Activated naive CD4-positive, alpha-beta T cell treated with anti-CD3 and anti-CD28 coated beads for 36 hours (primary cell): ENCODE measurements at regions of chr3 and their contacts with region 1.

Region 1: GRCh38 chr3:53375019-53375418 is 27.7 kb upstream of the DCP1A start:
- DNase-seq: peak; percentile 78
- H3K4me3 Mint-ChIP-seq: no peak overlapping the region
- H3K27ac Mint-ChIP-seq: no peak overlapping the region
- H3K4me1 Mint-ChIP-seq: no peaks in the 10 kb centered on the region
- H3K27me3 Mint-ChIP-seq: peaks cover 13% of the 10 kb centered on the region

Region 2: DNA sequence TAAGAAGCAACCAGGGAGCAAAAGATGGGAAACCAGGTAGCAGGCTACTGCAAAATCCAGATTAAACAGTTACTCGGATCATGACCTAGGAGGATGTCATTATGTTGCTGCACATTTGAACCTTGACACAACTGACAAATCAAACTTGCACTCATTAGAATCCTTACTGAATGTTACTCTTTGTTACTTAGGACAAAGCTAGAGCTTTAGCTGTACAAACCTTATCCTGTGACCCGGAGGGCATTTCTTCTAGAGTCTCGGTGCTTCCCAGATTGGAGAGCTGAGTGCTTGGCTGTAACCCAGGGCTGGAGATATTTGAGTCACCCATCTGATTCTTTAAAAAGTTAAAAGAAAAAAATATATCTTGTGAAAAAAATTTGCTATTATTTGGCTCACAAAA is 71.1 kb before region 1 on chr3:
- CTCF ChIA-PET with region 1: no interaction called
- intact Hi-C with region 1: loop called (anchors 1 kb)
- DNase-seq: no peak
- H3K4me3 Mint-ChIP-seq: no peak overlapping the region
- H3K27ac Mint-ChIP-seq: no peak overlapping the region
- H3K4me1 Mint-ChIP-seq: peaks cover 3% of the 10 kb centered on the region
- H3K27me3 Mint-ChIP-seq: no peaks in the 10 kb centered on the region

Region 3: GRCh38 chr3:53513556-53514190 is 138.7 kb after region 1 on chr3:
- CTCF ChIA-PET with region 1: interaction called, 4 read pairs
- intact Hi-C with region 1: loop called (anchors 10 kb)
- DNase-seq: peak; percentile 35
- H3K4me3 Mint-ChIP-seq: no peak overlapping the region
- H3K27ac Mint-ChIP-seq: no peak overlapping the region
- H3K4me1 Mint-ChIP-seq: no peaks in the 10 kb centered on the region
- H3K27me3 Mint-ChIP-seq: peaks cover 21% of the 10 kb centered on the region

Region 4: GRCh38 chr3:53709860-53710674 is 335.0 kb after region 1 on chr3:
- CTCF ChIA-PET with region 1: interaction called, 21 read pairs
- intact Hi-C with region 1: loop called (anchors 1 kb)
- DNase-seq: peak; percentile 79
- H3K4me3 Mint-ChIP-seq: no peak overlapping the region
- H3K27ac Mint-ChIP-seq: no peak overlapping the region
- H3K4me1 Mint-ChIP-seq: no peaks in the 10 kb centered on the region
- H3K27me3 Mint-ChIP-seq: peaks cover 3% of the 10 kb centered on the region

Region 5: GRCh38 chr3:53812434-53812833 is 437.4 kb after region 1 on chr3:
- CTCF ChIA-PET with region 1: interaction called, 3 read pairs
- intact Hi-C with region 1: loop called (anchors 10 kb)
- DNase-seq: no peak
- H3K4me3 Mint-ChIP-seq: no peak overlapping the region
- H3K27ac Mint-ChIP-seq: no peak overlapping the region
- H3K4me1 Mint-ChIP-seq: no peaks in the 10 kb centered on the region
- H3K27me3 Mint-ChIP-seq: no peaks in the 10 kb centered on the region

Region 6: GRCh38 chr3:53938645-53939044 is 563.6 kb after region 1 on chr3:
- CTCF ChIA-PET with region 1: interaction called, 5 read pairs
- intact Hi-C with region 1: loop called (anchors 10 kb)
- DNase-seq: peak; percentile 55
- H3K4me3 Mint-ChIP-seq: no peak overlapping the region
- H3K27ac Mint-ChIP-seq: no peak overlapping the region
- H3K4me1 Mint-ChIP-seq: no peaks in the 10 kb centered on the region
- H3K27me3 Mint-ChIP-seq: peaks cover 24% of the 10 kb centered on the region